Activated CD4-positive, alpha-beta T cell treated with anti-CD3 and anti-CD28 coated beads, Interleukin-2, amount 10 ng/mL, durations not matched to agents 24 days and 14 days (primary cell): ENCODE measurements at regions of chr12 and their contacts with region 1.

Region 1: GRCh38 chr12:11648831-11649702 is at the start of gene ETV6:
- DNase-seq: peak; percentile 94
- H3K4me3 Mint-ChIP-seq: peak within 1 kb of the TSS; percentile 91
- H3K27ac Mint-ChIP-seq: peak within 1 kb of the TSS; percentile 97
- H3K4me1 Mint-ChIP-seq: peaks cover 25% of the 10 kb centered on the region
- H3K27me3 Mint-ChIP-seq: no peaks in the 10 kb centered on the region
- total RNA-seq, gene ETV6: 114 and 119 TPM in 2 replicates

Region 2: DNA sequence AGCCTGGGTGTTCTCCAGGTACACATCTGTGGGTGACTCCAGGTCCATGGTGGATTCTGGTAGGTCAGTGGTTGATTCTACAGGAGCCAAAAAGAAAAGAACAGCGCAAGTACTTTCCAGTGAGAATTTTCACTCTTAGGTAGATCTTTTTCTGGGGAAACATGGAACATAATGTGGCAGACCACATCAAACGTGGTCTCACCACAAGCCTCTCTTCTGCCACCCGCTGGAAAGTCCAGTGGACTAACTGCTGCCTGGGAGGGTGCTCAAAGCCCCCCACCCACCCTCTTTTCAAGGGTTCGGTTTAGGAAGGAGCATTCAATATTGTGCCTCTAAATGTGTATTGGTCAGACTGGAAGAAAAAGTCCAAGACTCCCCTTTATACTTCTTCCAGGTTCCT is 217.6 kb before region 1 on chr12:
- intact Hi-C with region 1: no loop called
- DNase-seq: no peak
- H3K4me3 Mint-ChIP-seq: no peak overlapping the region
- H3K27ac Mint-ChIP-seq: no peak overlapping the region
- H3K4me1 Mint-ChIP-seq: peaks cover 2% of the 10 kb centered on the region
- H3K27me3 Mint-ChIP-seq: peaks cover 5% of the 10 kb centered on the region

Region 3: GRCh38 chr12:11553871-11554533 is 95.1 kb before region 1 on chr12:
- intact Hi-C with region 1: loop called (anchors 2 kb)
- DNase-seq: peak; percentile 88
- H3K4me3 Mint-ChIP-seq: peak overlapping the region; percentile 26
- H3K27ac Mint-ChIP-seq: no peak overlapping the region
- H3K4me1 Mint-ChIP-seq: peaks cover 22% of the 10 kb centered on the region
- H3K27me3 Mint-ChIP-seq: peaks cover 18% of the 10 kb centered on the region

Region 4: GRCh38 chr12:11607313-11608081 is 41.6 kb before region 1 on chr12:
- intact Hi-C with region 1: no loop called
- DNase-seq: no peak
- H3K4me3 Mint-ChIP-seq: no peak overlapping the region
- H3K27ac Mint-ChIP-seq: no peak overlapping the region
- H3K4me1 Mint-ChIP-seq: peaks cover 2% of the 10 kb centered on the region
- H3K27me3 Mint-ChIP-seq: peaks cover 4% of the 10 kb centered on the region

Region 5: DNA sequence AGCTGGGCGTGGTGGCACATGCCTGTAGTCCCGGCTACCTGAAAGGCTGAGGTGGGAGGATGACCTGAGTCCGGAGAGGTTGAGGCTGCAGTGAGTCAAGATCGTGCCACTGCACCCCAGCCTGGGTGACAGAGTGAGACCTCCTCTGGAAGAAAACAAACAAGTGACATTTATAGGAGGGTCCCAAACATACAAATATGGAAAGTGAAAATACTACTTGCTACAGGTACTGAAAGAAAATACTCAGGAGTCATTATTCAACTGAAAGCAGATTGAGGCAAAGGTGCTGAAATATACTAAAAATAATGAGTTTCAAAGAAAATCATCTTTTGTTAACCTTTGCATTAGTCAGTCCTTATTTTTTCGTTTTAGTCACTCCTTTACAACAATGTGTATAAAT is 53.9 kb after region 1 on chr12:
- intact Hi-C with region 1: loop called (anchors 2 kb)
- DNase-seq: no peak
- H3K4me3 Mint-ChIP-seq: peak overlapping the region; percentile 39
- H3K27ac Mint-ChIP-seq: peak overlapping the region; percentile 88
- H3K4me1 Mint-ChIP-seq: peaks cover 46% of the 10 kb centered on the region
- H3K27me3 Mint-ChIP-seq: no peaks in the 10 kb centered on the region

Region 6: DNA sequence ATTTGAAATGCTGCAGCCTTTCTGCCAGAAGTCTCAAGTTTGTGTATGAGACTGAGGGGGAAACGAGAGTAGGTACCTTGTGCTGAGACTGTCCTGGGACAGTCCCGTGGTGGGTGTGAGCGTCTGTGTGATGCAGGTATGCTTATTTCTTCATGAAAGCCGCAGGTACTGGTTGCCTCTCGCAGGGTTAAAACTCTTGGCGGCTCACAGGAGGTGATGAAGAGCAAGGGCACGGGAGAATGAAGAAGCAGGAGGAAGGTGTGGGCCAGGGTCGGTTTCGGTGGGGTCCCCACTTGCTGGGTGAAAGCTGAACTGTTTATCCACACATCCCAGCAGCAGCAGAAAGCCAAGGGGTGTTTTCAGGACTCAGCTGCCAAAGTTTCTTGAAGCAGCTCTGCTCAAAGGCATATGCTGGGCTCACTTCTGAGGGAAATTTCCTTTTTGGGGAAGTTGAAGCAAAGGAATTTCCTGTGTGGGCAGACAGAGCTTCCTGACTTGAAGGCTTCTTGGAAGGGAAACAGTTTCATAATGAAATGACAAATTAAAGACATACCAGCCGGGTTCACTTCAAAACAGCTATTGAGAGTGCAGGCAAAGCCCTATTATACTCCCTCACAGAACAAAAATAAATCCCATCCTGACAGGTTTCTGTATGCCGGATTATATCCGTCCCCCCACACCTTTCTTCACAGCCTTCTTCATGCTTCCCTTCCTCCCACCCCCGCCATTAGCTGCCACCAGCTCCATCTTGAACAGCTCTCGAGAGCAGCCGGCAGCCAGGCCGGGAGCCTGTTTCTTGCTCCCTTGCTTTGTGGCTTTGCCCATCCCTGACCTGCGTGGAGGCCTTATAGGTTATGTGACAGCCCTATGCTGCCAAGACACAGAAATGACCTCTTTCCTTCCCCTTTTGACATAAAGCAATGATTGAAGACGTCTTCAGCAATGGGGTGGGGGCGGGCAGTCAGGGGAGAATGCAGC is 117.0 kb after region 1 on chr12:
- intact Hi-C with region 1: loop called (anchors 1 kb)
- DNase-seq: peak; percentile 74
- H3K4me3 Mint-ChIP-seq: peak overlapping the region; percentile 69
- H3K27ac Mint-ChIP-seq: peak overlapping the region; percentile 95
- H3K4me1 Mint-ChIP-seq: peaks cover 90% of the 10 kb centered on the region
- H3K27me3 Mint-ChIP-seq: no peaks in the 10 kb centered on the region

Region 7: GRCh38 chr12:11901701-11902524 is 252.8 kb after region 1 on chr12:
- intact Hi-C with region 1: loop called (anchors 1 kb)
- DNase-seq: peak; percentile 72
- H3K4me3 Mint-ChIP-seq: peak overlapping the region; percentile 58
- H3K27ac Mint-ChIP-seq: peak overlapping the region; percentile 97
- H3K4me1 Mint-ChIP-seq: peaks cover 62% of the 10 kb centered on the region
- H3K27me3 Mint-ChIP-seq: no peaks in the 10 kb centered on the region

Region 8: GRCh38 chr12:11981121-11981733 is 332.2 kb after region 1 on chr12:
- intact Hi-C with region 1: loop called (anchors 1 kb)
- DNase-seq: peak; percentile 92
- H3K4me3 Mint-ChIP-seq: peak overlapping the region; percentile 68
- H3K27ac Mint-ChIP-seq: peak overlapping the region; percentile 99
- H3K4me1 Mint-ChIP-seq: peaks cover 62% of the 10 kb centered on the region
- H3K27me3 Mint-ChIP-seq: no peaks in the 10 kb centered on the region

Region 9: DNA sequence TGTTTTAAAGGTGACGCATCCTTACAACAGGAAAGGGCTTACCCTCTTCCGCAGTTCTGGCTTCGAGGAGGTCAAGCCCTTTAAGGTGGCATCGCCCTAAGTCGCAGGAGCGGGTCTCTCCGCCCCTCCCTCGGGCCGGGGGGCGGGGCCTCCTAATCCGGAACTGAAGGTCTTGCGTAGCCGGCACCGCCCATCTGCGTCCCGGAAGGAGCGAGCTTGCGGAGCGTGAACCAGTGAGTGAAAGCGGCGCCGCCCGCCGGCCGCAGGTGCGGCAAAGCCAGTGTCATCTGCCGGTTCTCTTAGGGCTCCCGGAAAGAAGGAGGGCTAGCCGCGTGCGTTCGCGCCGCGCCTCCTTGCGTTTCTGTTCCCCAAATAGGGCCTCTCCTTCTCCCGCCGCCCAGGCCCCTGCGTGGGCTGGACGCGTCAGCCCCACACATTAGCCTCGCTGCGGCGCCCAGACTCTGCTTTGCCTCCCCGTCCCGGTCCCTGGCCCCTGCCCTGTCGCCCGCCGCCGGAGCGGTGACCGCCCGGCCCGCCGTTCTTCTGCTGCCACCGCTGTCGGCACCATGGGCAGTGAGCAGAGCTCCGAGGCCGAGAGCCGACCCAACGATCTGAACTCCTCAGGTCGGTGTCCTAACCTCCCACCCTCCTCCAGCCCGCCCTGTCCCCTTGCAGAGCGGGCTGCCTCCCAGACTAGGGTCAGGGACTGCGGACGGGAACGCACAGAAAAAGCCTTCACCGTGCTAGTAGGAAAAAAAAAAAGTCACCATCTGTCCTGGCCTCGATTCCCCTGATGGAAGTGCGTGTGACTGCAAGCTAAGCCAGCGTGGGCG is 708.0 kb after region 1 on chr12 and contains the start of gene BORCS5:
- intact Hi-C with region 1: loop called (anchors 2 kb)
- DNase-seq: peak; percentile 100
- H3K4me3 Mint-ChIP-seq: peak within 1 kb of the TSS; percentile 98
- H3K27ac Mint-ChIP-seq: peak within 1 kb of the TSS; percentile 99
- H3K4me1 Mint-ChIP-seq: peaks cover 46% of the 10 kb centered on the region
- H3K27me3 Mint-ChIP-seq: no peaks in the 10 kb centered on the region
- total RNA-seq, gene BORCS5: 34.0 and 37.0 TPM in 2 replicates